ENCODE measurements at regions of chr7 and their contacts with region 1.

Region 1: DNA sequence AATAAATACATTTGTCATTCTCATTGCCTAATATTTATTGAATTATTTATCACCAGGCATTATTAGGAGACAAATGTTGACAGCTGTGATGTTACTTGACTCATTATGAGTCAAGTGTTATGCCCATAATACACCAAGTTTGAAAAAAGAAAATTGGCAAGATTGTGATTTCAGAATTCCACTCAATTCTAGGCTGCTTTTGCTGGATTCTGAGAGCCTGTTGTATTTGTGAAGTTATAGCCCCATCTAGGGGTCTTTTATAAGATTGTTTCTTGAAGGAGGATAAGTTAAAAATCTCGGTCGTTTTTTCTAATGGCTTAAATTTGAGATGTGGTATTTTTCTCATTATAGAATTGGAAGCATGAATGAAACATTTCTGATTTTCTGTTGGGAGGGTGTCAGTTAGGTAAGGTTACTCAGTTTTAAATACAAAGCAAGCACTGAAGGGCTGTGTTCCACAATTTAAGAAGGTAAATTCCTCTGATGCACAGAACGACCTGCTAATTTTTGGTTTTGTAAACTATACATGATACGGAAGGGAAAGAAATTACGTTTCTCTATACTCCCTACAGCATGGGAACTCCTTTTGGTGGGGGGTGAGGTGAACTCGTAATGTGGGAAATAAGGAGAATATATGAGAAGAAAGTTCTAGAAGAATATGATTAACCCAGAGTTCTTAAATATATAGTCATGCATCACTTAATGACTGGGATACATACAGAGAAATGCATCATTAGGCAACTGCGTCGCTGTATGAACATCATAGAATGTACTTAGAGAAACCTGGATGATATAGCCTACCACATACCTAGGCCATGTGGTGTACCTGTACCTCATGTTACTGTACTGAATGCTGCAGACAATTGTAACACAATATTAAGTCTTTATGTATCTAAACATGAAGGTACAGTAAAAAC is 2.6 kb downstream of the STK31 start:
- DNase-seq: no peak
- H3K4me3 ChIP-seq: no peak overlapping the region
- H3K27me3 ChIP-seq: no peaks in the 10 kb centered on the region
- CTCF ChIP-seq: peak; percentile 40; the same call in 1 of the 2 replicates

Region 2: GRCh38 chr7:23357190-23358093 is 355.2 kb before region 1 on chr7:
- CTCF ChIA-PET with region 1: no interaction called
- POLR2A ChIA-PET with region 1: no interaction called
- DNase-seq: no peak
- H3K4me3 ChIP-seq: no peak overlapping the region
- H3K27me3 ChIP-seq: no peaks in the 10 kb centered on the region
- CTCF ChIP-seq: 0 out of 2 replicates have a peak, but pooled peaks have one; percentile 8

Region 3: DNA sequence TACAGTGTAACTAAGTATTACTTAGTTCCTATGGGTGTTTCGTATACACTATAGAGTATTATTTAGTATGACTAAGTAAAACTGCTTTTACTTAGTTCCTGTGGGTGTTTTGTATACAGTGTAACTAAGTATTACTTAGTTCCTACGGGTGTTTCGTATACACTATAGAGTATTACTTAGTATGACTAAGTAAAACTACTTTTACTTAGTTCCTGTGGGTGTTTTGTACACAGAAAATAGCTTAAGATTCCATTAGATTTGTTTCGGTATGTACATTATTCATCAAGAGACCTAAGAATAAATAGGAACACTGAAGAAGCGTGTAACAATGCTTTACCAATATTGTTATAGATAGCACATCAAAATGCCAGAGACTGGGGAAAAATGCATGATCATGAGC is 267.3 kb before region 1 on chr7:
- CTCF ChIA-PET with region 1: no interaction called
- POLR2A ChIA-PET with region 1: no interaction called
- DNase-seq: no peak
- H3K4me3 ChIP-seq: no peak overlapping the region
- H3K27me3 ChIP-seq: peaks cover 1% of the 10 kb centered on the region; the same call in 1 of the 2 replicates
- CTCF ChIP-seq: no peak

Region 4: DNA sequence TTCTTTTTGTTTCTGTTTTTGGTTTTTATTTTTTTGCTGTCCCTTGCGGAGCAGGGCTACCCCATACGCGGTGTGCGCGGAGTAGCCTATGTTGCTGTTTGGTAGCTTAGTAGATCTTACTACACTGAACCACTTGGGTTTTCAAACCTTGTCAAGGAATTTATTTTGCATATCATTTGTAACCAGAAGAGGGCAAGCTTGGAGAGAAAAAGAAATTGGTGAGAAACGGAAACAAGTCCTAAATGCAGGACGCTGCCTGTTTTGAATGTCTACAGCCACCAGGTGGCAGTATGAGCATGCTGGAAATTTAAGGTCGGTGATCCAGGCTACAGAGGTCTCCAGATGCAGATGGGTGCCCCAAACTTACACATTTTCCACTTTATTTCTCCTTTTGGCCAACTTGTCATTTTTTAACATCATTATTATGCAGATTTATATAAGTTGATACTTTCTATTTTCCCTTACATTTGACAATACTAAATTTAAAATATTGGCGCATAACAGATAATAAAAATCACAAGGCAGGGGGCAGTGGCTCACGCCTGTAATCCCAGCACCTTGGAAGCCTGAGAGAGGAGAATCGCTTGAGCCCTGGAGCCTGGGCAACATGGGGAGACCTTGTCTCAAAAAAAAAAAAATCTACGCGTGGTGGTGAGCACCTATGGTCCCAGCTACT is 165.6 kb before region 1 on chr7:
- CTCF ChIA-PET with region 1: interaction called, 21 read pairs
- POLR2A ChIA-PET with region 1: no interaction called
- DNase-seq: peak; percentile 62
- H3K4me3 ChIP-seq: no peak overlapping the region
- H3K27me3 ChIP-seq: no peaks in the 10 kb centered on the region
- CTCF ChIP-seq: peak; percentile 94

Region 5: GRCh38 chr7:23570592-23571200 is 141.9 kb before region 1 on chr7:
- CTCF ChIA-PET with region 1: interaction called, 130 read pairs
- POLR2A ChIA-PET with region 1: no interaction called
- DNase-seq: peak; percentile 16
- H3K4me3 ChIP-seq: no peak overlapping the region
- H3K27me3 ChIP-seq: no peaks in the 10 kb centered on the region
- CTCF ChIP-seq: peak; percentile 86

Region 6: DNA sequence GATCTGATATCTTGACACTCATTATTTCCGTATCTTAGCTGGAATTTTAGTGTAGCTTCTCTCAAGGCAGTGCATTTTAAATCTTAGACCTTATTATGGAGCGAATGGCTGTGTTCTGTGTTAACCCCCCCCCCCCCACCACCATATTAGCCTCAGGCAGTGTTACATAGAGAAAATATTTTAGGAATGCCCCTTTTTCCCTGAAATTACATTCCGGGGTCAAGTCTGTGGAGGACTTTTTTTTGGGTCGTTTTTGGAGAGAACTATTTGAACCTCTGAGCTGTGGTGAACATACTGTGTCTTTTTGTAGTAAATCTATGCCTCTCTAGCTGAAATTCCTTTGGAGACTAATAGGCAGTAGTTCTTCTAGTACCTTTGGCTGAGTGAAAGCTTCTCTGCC is 112.4 kb before region 1 on chr7:
- CTCF ChIA-PET with region 1: interaction called, 3 read pairs
- POLR2A ChIA-PET with region 1: interaction called, 13 read pairs
- DNase-seq: peak; percentile 45
- H3K4me3 ChIP-seq: no peak overlapping the region
- H3K27me3 ChIP-seq: 0 out of 2 replicates have a peak, but pooled peaks cover 2% of the 10 kb centered on the region
- CTCF ChIP-seq: no peak

Region 7: GRCh38 chr7:23696916-23697441 is 15.6 kb before region 1 on chr7:
- CTCF ChIA-PET with region 1: interaction called, 25 read pairs
- POLR2A ChIA-PET with region 1: no interaction called
- DNase-seq: no peak
- H3K4me3 ChIP-seq: no peak overlapping the region
- H3K27me3 ChIP-seq: no peaks in the 10 kb centered on the region
- CTCF ChIP-seq: peak; percentile 73

Region 8: GRCh38 chr7:24172856-24173255 is 460.2 kb after region 1 on chr7:
- CTCF ChIA-PET with region 1: no interaction called
- POLR2A ChIA-PET with region 1: no interaction called
- DNase-seq: no peak
- H3K4me3 ChIP-seq: no peak overlapping the region
- H3K27me3 ChIP-seq: no peaks in the 10 kb centered on the region
- CTCF ChIP-seq: no peak